PC-9 (cell line): ENCODE measurements at regions of chr4 and their contacts with region 1.

Region 1: GRCh38 chr4:166165829-166166420 is 292.9 kb downstream of the TLL1 start:
- DNase-seq: peak; percentile 3 to 48
- H3K4me3 ChIP-seq: no peak overlapping the region
- H3K27ac ChIP-seq: no peak overlapping the region
- H3K4me1 ChIP-seq: no peaks in the 10 kb centered on the region
- H3K27me3 ChIP-seq: no peaks in the 10 kb centered on the region
- CTCF ChIP-seq: peak; percentile 74

Region 2: DNA sequence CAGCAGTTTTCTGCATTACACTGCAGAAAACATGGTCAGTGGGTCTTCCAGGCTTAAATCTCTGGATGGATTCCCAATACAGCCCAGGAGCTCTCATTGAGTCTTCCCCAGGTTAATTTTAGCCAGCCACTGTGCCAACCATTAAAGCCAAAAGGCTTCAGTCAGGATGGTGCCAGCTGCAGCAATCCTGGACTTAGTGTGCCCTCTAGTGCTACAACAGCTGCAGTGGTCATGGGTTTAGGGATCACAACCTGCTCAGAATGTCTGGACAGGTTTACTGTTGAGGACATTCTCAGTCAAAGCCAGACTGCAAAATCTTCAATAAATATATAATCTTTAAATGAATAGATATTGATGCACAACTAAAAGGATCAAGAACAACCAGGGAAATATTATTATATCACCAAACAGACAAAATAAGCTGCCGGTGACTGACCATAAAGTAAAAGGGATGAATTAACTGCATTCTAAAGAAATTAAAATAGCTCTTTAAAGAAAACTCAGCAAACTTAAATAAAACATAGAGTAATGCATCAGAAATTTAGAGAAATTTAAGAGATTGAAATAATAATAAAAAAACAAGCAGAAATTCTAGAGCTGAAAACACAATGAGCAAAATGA is 428.5 kb after region 1 on chr4:
- CTCF ChIA-PET with region 1: interaction called, 4 read pairs
- POLR2A ChIA-PET with region 1: no interaction called
- intact Hi-C with region 1: loop called (anchors 1 kb)
- DNase-seq: peak in 1 of 2 experiments; percentile 43
- H3K4me3 ChIP-seq: no peak overlapping the region
- H3K27ac ChIP-seq: no peak overlapping the region
- H3K4me1 ChIP-seq: no peaks in the 10 kb centered on the region
- H3K27me3 ChIP-seq: no peaks in the 10 kb centered on the region
- CTCF ChIP-seq: peak; percentile 66

Region 3: GRCh38 chr4:167234316-167234881 is 1068.5 kb after region 1 on chr4 and contains the start of gene SPOCK3:
- CTCF ChIA-PET with region 1: interaction called, 18 read pairs
- POLR2A ChIA-PET with region 1: no interaction called
- intact Hi-C with region 1: no loop called
- DNase-seq: peak in 1 of 2 experiments; percentile 51
- H3K4me3 ChIP-seq: peak within 1 kb of the TSS; percentile 66
- H3K27ac ChIP-seq: no peak within 1 kb of the TSS
- H3K4me1 ChIP-seq: no peaks in the 10 kb centered on the region
- H3K27me3 ChIP-seq: no peaks in the 10 kb centered on the region
- CTCF ChIP-seq: no peak
- total RNA-seq, gene SPOCK3: not detected in 2 replicates

Region 4: GRCh38 chr4:168076989-168077725 is 1911.2 kb after region 1 on chr4:
- CTCF ChIA-PET with region 1: no interaction called
- POLR2A ChIA-PET with region 1: no interaction called
- intact Hi-C with region 1: loop called (anchors 1 kb)
- DNase-seq: peak; percentile 34 to 49
- H3K4me3 ChIP-seq: no peak overlapping the region
- H3K27ac ChIP-seq: no peak overlapping the region
- H3K4me1 ChIP-seq: no peaks in the 10 kb centered on the region
- H3K27me3 ChIP-seq: no peaks in the 10 kb centered on the region
- CTCF ChIP-seq: peak; percentile 84